H1 (cell line): ENCODE measurements at regions of chr22 and their contacts with region 1.

Region 1: DNA sequence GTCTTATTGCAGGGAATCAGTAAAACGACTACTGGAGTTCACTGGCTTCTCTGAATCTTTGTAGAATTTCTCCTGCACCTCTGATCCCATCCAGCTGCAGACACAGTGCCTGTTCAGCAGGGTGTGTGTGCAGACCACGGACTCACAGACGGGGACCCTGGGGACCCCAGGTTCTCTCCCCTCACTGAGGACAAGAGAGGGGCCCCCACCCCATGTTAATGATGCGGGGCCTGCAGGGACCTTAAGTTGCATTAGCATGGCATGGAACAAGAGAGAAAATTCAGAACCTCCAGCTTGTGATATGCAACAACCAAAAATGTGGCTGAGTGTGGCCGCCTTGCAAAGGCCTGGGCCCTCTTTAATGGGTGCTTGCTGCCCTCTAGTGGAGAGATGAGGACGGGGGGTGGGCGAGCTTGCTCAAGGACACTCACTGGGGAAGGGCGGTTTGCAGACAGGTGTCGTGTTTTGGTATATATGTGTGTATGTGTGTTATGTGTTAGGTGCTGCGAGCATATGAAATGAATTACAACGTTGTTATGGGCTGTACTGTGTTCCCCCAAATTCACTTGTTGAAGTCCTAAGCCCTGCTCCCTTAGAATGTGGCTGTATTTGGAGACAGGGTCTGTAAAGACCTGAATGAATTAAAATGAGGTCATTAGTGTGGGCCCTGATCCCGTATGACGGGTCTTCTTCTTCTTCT is 84.4 kb upstream of the SEPTIN5 start:
- DNase-seq: peak; percentile 60 to 94
- H3K4me3 ChIP-seq: no peak overlapping the region
- H3K27ac ChIP-seq: no peak overlapping the region
- H3K4me1 ChIP-seq: peaks cover 0 to 10% (median under 1%) of the 10 kb centered on the region in 4 experiments; a peak in 3 of 7 replicates
- H3K27me3 ChIP-seq: no peaks in the 10 kb centered on the region
- CTCF ChIP-seq: peak; percentile 87 to 96 (median 93)
- EP300 ChIP-seq: no peak
- POLR2A ChIP-seq: no peak
- RAD21 ChIP-seq: peak; percentile 96 to 99

Region 2: GRCh38 chr22:19473578-19473977 is 156.3 kb before region 1 on chr22:
- CTCF ChIA-PET with region 1: interaction called, 14 read pairs
- POLR2A ChIA-PET with region 1: interaction called, 3 read pairs
- DNase-seq: no peak
- H3K4me3 ChIP-seq: no peak overlapping the region
- H3K27ac ChIP-seq: no peak overlapping the region
- H3K4me1 ChIP-seq: peaks cover 0 to 4% (median 1%) of the 10 kb centered on the region in 4 experiments; a peak in 2 of 7 replicates
- H3K27me3 ChIP-seq: no peaks in the 10 kb centered on the region
- CTCF ChIP-seq: peak in 1 of 3 experiments; percentile 20; a peak in 1 of 4 replicates
- EP300 ChIP-seq: no peak
- POLR2A ChIP-seq: no peak
- RAD21 ChIP-seq: no peak

Region 3: GRCh38 chr22:19495562-19496323 is 134.1 kb before region 1 on chr22:
- CTCF ChIA-PET with region 1: interaction called, 21 read pairs
- POLR2A ChIA-PET with region 1: interaction called, 3 read pairs
- DNase-seq: no peak
- H3K4me3 ChIP-seq: no peak overlapping the region
- H3K27ac ChIP-seq: no peak overlapping the region
- H3K4me1 ChIP-seq: no peaks in the 10 kb centered on the region
- H3K27me3 ChIP-seq: no peaks in the 10 kb centered on the region
- CTCF ChIP-seq: no peak; a peak in 1 of 4 replicates
- EP300 ChIP-seq: no peak
- POLR2A ChIP-seq: no peak
- RAD21 ChIP-seq: peak; percentile 40 to 49; a peak in 2 of 4 replicates

Region 4: DNA sequence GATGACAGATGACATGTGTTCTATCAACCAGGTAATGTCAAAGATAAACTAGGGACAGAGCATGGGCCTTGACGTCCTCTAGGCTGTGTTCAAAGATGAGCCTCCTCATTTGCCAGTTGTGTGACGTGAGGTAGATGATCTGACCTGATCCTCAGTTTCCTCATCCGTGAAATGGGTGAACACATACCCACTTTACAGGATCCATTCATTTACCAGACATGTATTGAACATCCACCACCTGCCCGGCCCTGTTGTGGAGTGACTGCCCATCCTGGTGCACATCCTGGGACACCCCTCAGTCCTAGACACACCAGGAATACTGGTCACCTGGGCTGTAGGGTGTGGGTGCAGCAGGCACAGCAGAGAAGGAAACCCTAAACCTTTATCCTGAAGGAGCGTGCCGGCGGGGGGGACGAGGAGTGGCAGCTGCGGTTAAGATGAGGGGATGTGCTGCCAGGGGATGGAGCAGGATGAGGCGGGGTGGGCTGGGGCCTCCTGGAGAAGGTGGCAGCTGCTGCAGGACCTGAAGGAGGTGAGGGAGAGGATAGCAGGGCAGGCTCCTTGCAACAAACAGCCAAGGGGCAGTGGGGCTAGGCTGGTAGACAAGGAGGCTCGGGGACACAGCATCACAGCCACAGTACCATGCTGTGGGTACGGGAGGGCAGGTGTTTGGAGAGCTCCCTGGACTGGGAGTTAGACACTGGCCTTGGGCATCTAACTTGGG is 114.1 kb before region 1 on chr22:
- CTCF ChIA-PET with region 1: interaction called, 10 read pairs
- POLR2A ChIA-PET with region 1: interaction called, 4 read pairs
- DNase-seq: no peak
- H3K4me3 ChIP-seq: no peak overlapping the region
- H3K27ac ChIP-seq: no peak overlapping the region
- H3K4me1 ChIP-seq: 0 out of 7 replicates have a peak, but pooled peaks cover 0 to 3% (median 0%) of the 10 kb centered on the region in 4 experiments
- H3K27me3 ChIP-seq: no peaks in the 10 kb centered on the region
- CTCF ChIP-seq: no peak
- EP300 ChIP-seq: no peak
- POLR2A ChIP-seq: no peak
- RAD21 ChIP-seq: no peak

Region 5: GRCh38 chr22:19576460-19577421 is 53.1 kb before region 1 on chr22:
- CTCF ChIA-PET with region 1: interaction called, 14 read pairs
- POLR2A ChIA-PET with region 1: no interaction called
- DNase-seq: no peak
- H3K4me3 ChIP-seq: no peak overlapping the region
- H3K27ac ChIP-seq: no peak overlapping the region
- H3K4me1 ChIP-seq: peaks cover 0 to 3% (median under 1%) of the 10 kb centered on the region in 4 experiments; a peak in 3 of 7 replicates
- H3K27me3 ChIP-seq: no peaks in the 10 kb centered on the region
- CTCF ChIP-seq: peak; percentile 12 to 17 (median 13); a peak in 3 of 4 replicates
- EP300 ChIP-seq: no peak
- POLR2A ChIP-seq: no peak
- RAD21 ChIP-seq: peak; percentile 52 to 61; a peak in 3 of 4 replicates

Region 6: GRCh38 chr22:19607192-19608002 is 22.5 kb before region 1 on chr22:
- CTCF ChIA-PET with region 1: interaction called, 12 read pairs
- POLR2A ChIA-PET with region 1: interaction called, 4 read pairs
- DNase-seq: peak in 1 of 2 experiments; percentile 55
- H3K4me3 ChIP-seq: no peak overlapping the region
- H3K27ac ChIP-seq: no peak overlapping the region
- H3K4me1 ChIP-seq: peaks cover 0 to 26% (median 21%) of the 10 kb centered on the region in 4 experiments; a peak in 6 of 7 replicates
- H3K27me3 ChIP-seq: no peaks in the 10 kb centered on the region
- CTCF ChIP-seq: no peak
- EP300 ChIP-seq: no peak
- POLR2A ChIP-seq: no peak
- RAD21 ChIP-seq: no peak

Region 7: GRCh38 chr22:19644314-19645223 is 14.7 kb after region 1 on chr22:
- CTCF ChIA-PET with region 1: interaction called, 56 read pairs
- POLR2A ChIA-PET with region 1: no interaction called
- DNase-seq: no peak
- H3K4me3 ChIP-seq: no peak overlapping the region
- H3K27ac ChIP-seq: no peak overlapping the region
- H3K4me1 ChIP-seq: peaks cover 0 to 2% (median 0%) of the 10 kb centered on the region in 4 experiments; a peak in 4 of 7 replicates
- H3K27me3 ChIP-seq: peaks cover 0 to 2% (median under 1%) of the 10 kb centered on the region in 4 experiments; a peak in 2 of 7 replicates
- CTCF ChIP-seq: no peak
- EP300 ChIP-seq: no peak
- POLR2A ChIP-seq: no peak
- RAD21 ChIP-seq: no peak

Region 8: GRCh38 chr22:19745155-19746101 is 115.6 kb after region 1 on chr22:
- CTCF ChIA-PET with region 1: no interaction called
- POLR2A ChIA-PET with region 1: no interaction called
- DNase-seq: no peak
- H3K4me3 ChIP-seq: no peak overlapping the region
- H3K27ac ChIP-seq: no peak overlapping the region
- H3K4me1 ChIP-seq: peaks cover 0 to 10% (median under 1%) of the 10 kb centered on the region in 4 experiments; a peak in 2 of 7 replicates
- H3K27me3 ChIP-seq: peaks cover 0 to 2% (median 0%) of the 10 kb centered on the region in 4 experiments; a peak in 4 of 7 replicates
- CTCF ChIP-seq: no peak
- EP300 ChIP-seq: no peak
- POLR2A ChIP-seq: no peak
- RAD21 ChIP-seq: no peak

Region 9: GRCh38 chr22:19844377-19845053 is 214.6 kb after region 1 on chr22:
- CTCF ChIA-PET with region 1: no interaction called
- POLR2A ChIA-PET with region 1: no interaction called
- DNase-seq: peak in 1 of 2 experiments; percentile 48
- H3K4me3 ChIP-seq: no peak overlapping the region
- H3K27ac ChIP-seq: no peak overlapping the region
- H3K4me1 ChIP-seq: peaks cover 0 to 3% (median 0%) of the 10 kb centered on the region in 4 experiments; a peak in 4 of 7 replicates
- H3K27me3 ChIP-seq: no peaks in the 10 kb centered on the region
- CTCF ChIP-seq: peak in 1 of 3 experiments; percentile 0; a peak in 1 of 4 replicates
- EP300 ChIP-seq: no peak
- POLR2A ChIP-seq: peak in 1 of 2 experiments; percentile 18; a peak in 1 of 3 replicates
- RAD21 ChIP-seq: no peak